HAP-1 (cell line): ENCODE measurements at regions of chr10 and their contacts with region 1.

Region 1: GRCh38 chr10:28991326-28992270 is 297.3 kb upstream of the LYZL1 start:
- DNase-seq: peak; percentile 71 to 83
- H3K4me3 ChIP-seq: no peak overlapping the region
- H3K4me1 ChIP-seq: peaks cover 17% of the 10 kb centered on the region
- H3K27me3 ChIP-seq: no peaks in the 10 kb centered on the region

Region 2: DNA sequence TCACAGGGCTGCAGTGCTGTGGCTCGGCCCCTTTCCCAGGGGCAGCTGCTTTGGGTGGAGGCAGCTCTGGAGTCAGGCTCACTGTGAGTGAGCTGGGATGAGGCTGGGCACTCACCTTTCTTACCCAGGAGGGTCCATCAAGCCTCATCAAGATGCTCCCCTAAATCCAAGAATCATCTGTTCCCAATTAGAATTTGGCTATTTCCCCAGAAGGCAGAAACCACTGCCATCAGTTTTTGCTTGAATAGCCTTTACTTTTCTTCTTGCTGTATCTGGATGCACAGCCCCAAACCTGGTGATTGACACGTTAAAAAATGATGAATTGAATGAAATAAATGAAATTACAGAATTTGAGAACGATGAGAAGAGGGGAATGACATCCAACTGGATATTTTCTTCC is 223.0 kb after region 1 on chr10:
- in situ Hi-C with region 1: no loop called
- DNase-seq: no peak
- H3K4me3 ChIP-seq: no peak overlapping the region
- H3K4me1 ChIP-seq: no peaks in the 10 kb centered on the region
- H3K27me3 ChIP-seq: peaks cover 2% of the 10 kb centered on the region; the same call in 1 of the 2 replicates

Region 3: DNA sequence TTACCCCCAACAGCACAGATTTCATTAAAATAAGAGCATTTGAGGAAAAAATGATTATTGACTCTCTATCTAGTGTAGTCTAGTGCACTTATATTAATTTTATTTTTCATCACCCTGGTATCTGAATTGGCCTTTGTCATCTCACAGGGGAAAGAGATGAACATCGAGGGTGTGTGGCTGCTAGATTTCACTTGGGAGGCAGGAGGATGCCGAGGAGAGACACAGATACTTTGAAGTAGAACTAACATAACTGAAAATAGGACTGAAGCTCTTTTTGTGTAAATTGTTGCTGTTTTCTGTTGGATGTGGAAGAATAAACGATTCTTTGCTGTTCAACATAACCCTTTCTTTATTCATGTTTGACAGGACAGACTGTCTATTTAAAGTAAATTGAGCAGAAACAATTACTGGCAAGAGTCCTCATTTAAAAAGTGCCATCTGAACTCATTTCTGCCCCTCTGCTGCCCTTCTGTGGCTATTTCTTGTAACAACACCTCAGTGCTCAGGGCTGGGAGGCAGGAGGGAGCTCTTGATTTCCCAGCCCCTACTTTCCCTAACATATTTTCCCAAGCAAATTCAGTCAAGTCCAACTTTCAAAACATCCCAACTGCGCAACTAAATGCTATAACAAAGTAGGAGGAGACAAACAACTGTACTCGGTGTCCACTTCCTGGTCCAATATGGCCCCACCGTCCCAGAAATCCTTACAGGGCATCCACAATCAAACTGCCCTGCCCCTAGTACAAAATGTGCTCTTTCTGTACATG is 312.8 kb after region 1 on chr10:
- in situ Hi-C with region 1: loop called (anchors 10 kb)
- DNase-seq: peak; percentile 70 to 74
- H3K4me3 ChIP-seq: no peak overlapping the region
- H3K4me1 ChIP-seq: peaks cover 4% of the 10 kb centered on the region
- H3K27me3 ChIP-seq: peaks cover 8% of the 10 kb centered on the region